ENCODE measurements at regions of chr2 and their contacts with region 1.

Region 1: GRCh38 chr2:70964596-70965386 is 13.6 kb upstream of the ANKRD53 start:
- DNase-seq: peak; percentile 86
- H3K4me3 Mint-ChIP-seq: peak overlapping the region; percentile 81
- H3K27ac Mint-ChIP-seq: no peak overlapping the region
- H3K4me1 Mint-ChIP-seq: peaks cover 3% of the 10 kb centered on the region
- H3K27me3 Mint-ChIP-seq: peaks cover 17% of the 10 kb centered on the region

Region 2: DNA sequence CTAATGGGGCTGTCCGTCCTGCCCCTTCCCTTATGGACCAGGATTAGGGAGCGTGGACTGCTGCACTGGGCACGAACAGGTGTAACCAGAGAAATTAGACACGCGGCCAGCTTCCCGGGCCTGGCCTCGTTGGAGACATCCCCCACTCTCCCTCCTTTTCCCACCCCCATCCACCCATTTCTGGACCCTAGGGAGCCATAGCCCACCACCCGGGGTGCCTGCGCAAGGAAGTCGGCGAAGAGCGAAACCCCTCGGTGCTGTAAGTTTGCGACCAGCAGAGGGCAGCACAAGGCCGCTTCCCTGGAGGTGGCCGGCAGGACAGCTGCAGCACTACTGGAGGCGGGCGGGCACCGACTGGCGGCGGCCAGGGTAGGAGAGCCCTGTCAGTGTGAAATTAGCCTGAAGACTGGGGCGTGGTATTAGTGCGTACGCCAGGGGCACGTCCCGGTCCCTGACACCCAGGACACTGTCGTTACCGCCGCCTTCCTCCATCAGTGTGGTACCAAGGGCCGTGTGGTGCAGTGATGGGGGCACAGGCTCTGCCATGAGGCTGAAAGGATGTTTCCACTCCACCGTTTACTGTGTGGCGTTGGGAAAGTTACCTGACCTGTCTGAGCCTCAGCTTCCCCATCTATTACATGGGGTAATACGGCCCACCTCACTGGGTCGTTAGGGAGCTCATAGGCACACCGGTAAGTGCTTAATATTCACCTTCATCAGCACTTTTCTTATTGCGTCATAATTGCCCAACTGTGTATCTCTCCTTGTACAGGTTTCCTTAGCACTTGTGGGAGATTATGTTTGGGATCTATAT is 93.2 kb before region 1 on chr2:
- CTCF ChIA-PET with region 1: interaction called, 14 read pairs
- intact Hi-C with region 1: no loop called
- DNase-seq: peak; percentile 90
- H3K4me3 Mint-ChIP-seq: no peak overlapping the region
- H3K27ac Mint-ChIP-seq: no peak overlapping the region
- H3K4me1 Mint-ChIP-seq: peaks cover 5% of the 10 kb centered on the region
- H3K27me3 Mint-ChIP-seq: peaks cover 32% of the 10 kb centered on the region

Region 3: GRCh38 chr2:70977605-70978205 is 12.9 kb after region 1 on chr2:
- CTCF ChIA-PET with region 1: interaction called, 58 read pairs
- intact Hi-C with region 1: loop called (anchors 1 kb)
- DNase-seq: peak; percentile 63
- H3K4me3 Mint-ChIP-seq: peak overlapping the region; percentile 72
- H3K27ac Mint-ChIP-seq: no peak overlapping the region
- H3K4me1 Mint-ChIP-seq: peaks cover 13% of the 10 kb centered on the region
- H3K27me3 Mint-ChIP-seq: no peaks in the 10 kb centered on the region

Region 4: GRCh38 chr2:70984576-70985282 is 19.9 kb after region 1 on chr2:
- CTCF ChIA-PET with region 1: interaction called, 58 read pairs
- intact Hi-C with region 1: no loop called
- DNase-seq: peak; percentile 88
- H3K4me3 Mint-ChIP-seq: no peak overlapping the region
- H3K27ac Mint-ChIP-seq: no peak overlapping the region
- H3K4me1 Mint-ChIP-seq: peaks cover 15% of the 10 kb centered on the region
- H3K27me3 Mint-ChIP-seq: no peaks in the 10 kb centered on the region

Region 5: GRCh38 chr2:70994756-70995729 is 30.3 kb after region 1 on chr2 and contains the start of gene TEX261:
- CTCF ChIA-PET with region 1: interaction called, 8 read pairs
- intact Hi-C with region 1: loop called (anchors 1 kb)
- DNase-seq: peak; percentile 91
- H3K4me3 Mint-ChIP-seq: peak within 1 kb of the TSS; percentile 94
- H3K27ac Mint-ChIP-seq: peak within 1 kb of the TSS; percentile 89
- H3K4me1 Mint-ChIP-seq: peaks cover 33% of the 10 kb centered on the region
- H3K27me3 Mint-ChIP-seq: no peaks in the 10 kb centered on the region
- total RNA-seq, gene TEX261: 17.8 to 18.7 TPM

Region 6: DNA sequence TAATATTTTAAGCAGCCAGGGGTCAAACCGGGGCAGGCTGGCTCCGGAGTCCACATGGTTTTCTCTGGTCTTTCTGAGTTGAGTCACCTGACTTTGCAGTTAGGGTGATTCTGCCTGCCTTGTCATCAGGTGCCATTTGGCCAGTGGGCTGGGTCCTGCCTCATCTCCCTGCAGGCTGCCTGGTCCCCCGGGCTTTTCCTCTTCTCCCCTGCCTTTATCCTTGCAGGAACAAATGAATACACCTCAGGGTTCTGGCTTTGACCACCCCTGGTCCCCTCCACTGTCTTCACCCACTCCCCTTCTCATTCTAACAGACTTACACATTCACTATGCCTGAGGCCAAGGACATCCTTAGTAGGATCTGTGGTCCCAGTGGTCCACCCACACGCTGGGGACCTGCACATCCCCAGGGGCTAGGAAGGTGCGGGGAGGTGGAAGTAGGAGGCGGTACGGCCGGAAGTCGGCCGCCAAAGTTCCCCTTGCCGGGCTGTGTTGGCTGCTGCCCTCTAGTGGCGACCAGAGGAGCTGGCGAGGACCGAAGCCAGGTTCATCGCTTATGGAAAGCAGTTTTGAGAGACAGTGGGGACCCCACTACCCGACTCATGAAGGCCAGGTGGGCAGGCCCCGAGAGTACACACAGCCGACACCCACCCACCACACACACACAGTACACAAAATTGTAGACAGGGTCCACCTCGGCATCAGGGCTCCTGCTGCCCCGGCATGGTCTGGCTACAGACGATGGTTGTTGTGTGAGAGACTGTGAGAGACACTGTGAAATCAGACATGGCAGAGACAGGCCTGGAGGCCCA is 36.2 kb after region 1 on chr2:
- CTCF ChIA-PET with region 1: interaction called, 26 read pairs
- intact Hi-C with region 1: loop called (anchors 1 kb)
- DNase-seq: peak; percentile 91
- H3K4me3 Mint-ChIP-seq: peak overlapping the region; percentile 73
- H3K27ac Mint-ChIP-seq: peak overlapping the region; percentile 63
- H3K4me1 Mint-ChIP-seq: peaks cover 16% of the 10 kb centered on the region
- H3K27me3 Mint-ChIP-seq: no peaks in the 10 kb centered on the region

Region 7: DNA sequence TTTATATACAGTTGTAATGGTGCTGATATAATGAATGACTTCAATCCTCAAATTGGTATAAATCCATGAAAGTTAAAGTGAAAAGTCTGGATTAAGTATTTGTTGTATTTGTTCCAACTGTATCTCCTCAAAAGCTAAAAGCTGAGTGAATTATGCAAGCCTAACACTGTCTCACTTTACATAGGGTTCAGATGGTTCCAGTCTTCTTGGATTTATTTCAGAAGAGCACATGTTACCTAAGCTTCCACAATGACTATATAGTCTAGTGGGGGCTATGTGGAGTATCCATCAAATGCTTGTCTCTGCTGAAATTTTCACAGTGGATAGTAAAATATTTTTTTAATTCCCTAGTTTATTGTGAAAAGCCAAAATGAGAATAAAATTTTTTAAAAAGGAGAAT is 152.3 kb after region 1 on chr2:
- CTCF ChIA-PET with region 1: no interaction called
- intact Hi-C with region 1: no loop called
- DNase-seq: no peak
- H3K4me3 Mint-ChIP-seq: no peak overlapping the region
- H3K27ac Mint-ChIP-seq: no peak overlapping the region
- H3K4me1 Mint-ChIP-seq: peaks cover 3% of the 10 kb centered on the region
- H3K27me3 Mint-ChIP-seq: no peaks in the 10 kb centered on the region